MCF 10A (cell line): ENCODE measurements at regions of chr22 and their contacts with region 1.

Region 1: GRCh38 chr22:40436505-40437451 is 66.4 kb downstream of the SGSM3 start:
- DNase-seq: peak; percentile 71
- H3K4me3 Mint-ChIP-seq: no peak overlapping the region
- H3K27ac Mint-ChIP-seq: peak overlapping the region; percentile 19
- H3K4me1 Mint-ChIP-seq: peaks cover 27% of the 10 kb centered on the region
- H3K27me3 Mint-ChIP-seq: no peaks in the 10 kb centered on the region
- CTCF ChIP-seq: peak; percentile 54

Region 2: GRCh38 chr22:40426594-40427333 is 10.0 kb before region 1 on chr22:
- CTCF ChIA-PET with region 1: interaction called, 15 read pairs
- POLR2A ChIA-PET with region 1: interaction called, 3 read pairs
- intact Hi-C with region 1: no loop called
- DNase-seq: no peak
- H3K4me3 Mint-ChIP-seq: no peak overlapping the region
- H3K27ac Mint-ChIP-seq: no peak overlapping the region
- H3K4me1 Mint-ChIP-seq: peaks cover 5% of the 10 kb centered on the region
- H3K27me3 Mint-ChIP-seq: no peaks in the 10 kb centered on the region
- CTCF ChIP-seq: no peak

Region 3: GRCh38 chr22:40472036-40472435 is 35.3 kb after region 1 on chr22:
- CTCF ChIA-PET with region 1: interaction called, 12 read pairs
- POLR2A ChIA-PET with region 1: interaction called, 4 read pairs
- intact Hi-C with region 1: no loop called
- DNase-seq: no peak
- H3K4me3 Mint-ChIP-seq: no peak overlapping the region
- H3K27ac Mint-ChIP-seq: no peak overlapping the region
- H3K4me1 Mint-ChIP-seq: peaks cover 6% of the 10 kb centered on the region
- H3K27me3 Mint-ChIP-seq: no peaks in the 10 kb centered on the region
- CTCF ChIP-seq: no peak

Region 4: GRCh38 chr22:40487663-40488249 is 51.0 kb after region 1 on chr22:
- CTCF ChIA-PET with region 1: interaction called, 80 read pairs
- POLR2A ChIA-PET with region 1: interaction called, 48 read pairs
- intact Hi-C with region 1: loop called (anchors 1 kb)
- DNase-seq: peak; percentile 54
- H3K4me3 Mint-ChIP-seq: no peak overlapping the region
- H3K27ac Mint-ChIP-seq: peak overlapping the region; percentile 94
- H3K4me1 Mint-ChIP-seq: peaks cover 39% of the 10 kb centered on the region
- H3K27me3 Mint-ChIP-seq: no peaks in the 10 kb centered on the region
- CTCF ChIP-seq: peak; percentile 55

Region 5: DNA sequence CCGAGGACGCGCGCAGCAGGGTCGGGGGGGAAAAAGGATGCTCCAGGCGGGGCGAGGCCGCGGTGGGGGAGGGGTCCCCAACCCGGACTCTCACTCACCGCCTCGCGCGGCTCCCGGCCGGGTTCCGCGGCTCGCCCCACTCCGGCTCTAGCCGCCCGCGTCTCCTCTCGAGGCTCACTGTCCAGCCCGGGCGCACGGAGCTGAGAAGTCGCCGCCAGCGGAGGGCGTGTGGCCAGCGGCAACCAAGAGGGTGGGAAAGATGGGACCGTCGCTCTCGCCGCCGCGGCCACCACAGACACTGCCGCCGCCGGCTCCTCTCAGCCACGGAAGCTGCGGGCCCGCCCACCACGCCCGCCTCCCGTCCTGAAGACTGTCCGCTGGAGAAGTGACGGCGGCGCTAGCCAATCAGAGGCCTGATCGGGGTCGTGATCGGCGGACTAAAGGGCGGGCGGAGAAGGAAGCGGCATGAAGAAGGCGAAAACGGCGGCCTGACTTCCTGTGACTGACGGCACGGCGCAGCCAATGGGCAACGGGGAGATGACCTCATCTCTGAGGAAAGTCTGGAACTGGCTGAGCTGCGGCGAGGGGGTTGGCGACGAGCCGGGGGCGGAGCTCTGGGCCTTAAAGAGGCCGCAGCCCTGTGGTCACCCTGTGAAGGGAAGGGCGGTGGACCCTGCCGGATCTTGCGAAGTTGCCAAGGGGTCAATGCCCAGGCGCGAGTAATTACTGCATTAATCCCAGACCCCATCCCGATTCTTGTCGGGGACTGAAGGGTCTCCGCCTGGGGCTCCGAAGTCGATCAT is 199.8 kb after region 1 on chr22 and contains the start of gene MRTFA:
- CTCF ChIA-PET with region 1: interaction called, 10 read pairs
- POLR2A ChIA-PET with region 1: interaction called, 5 read pairs
- intact Hi-C with region 1: no loop called
- DNase-seq: peak; percentile 99
- H3K4me3 Mint-ChIP-seq: peak within 1 kb of the TSS; percentile 88
- H3K27ac Mint-ChIP-seq: peak within 1 kb of the TSS; percentile 94
- H3K4me1 Mint-ChIP-seq: peaks cover 28% of the 10 kb centered on the region
- H3K27me3 Mint-ChIP-seq: no peaks in the 10 kb centered on the region
- CTCF ChIP-seq: no peak
- total RNA-seq, gene MRTFA: 47.2 and 52.7 TPM in 2 replicates

Region 6: GRCh38 chr22:40679964-40680818 is 243.4 kb after region 1 on chr22:
- CTCF ChIA-PET with region 1: interaction called, 10 read pairs
- POLR2A ChIA-PET with region 1: no interaction called
- intact Hi-C with region 1: no loop called
- DNase-seq: no peak
- H3K4me3 Mint-ChIP-seq: no peak overlapping the region
- H3K27ac Mint-ChIP-seq: no peak overlapping the region
- H3K4me1 Mint-ChIP-seq: peaks cover 12% of the 10 kb centered on the region
- H3K27me3 Mint-ChIP-seq: no peaks in the 10 kb centered on the region
- CTCF ChIP-seq: no peak